Activated naive CD4-positive, alpha-beta T cell treated with anti-CD3 and anti-CD28 coated beads for 36 hours (primary cell): ENCODE measurements at regions of chr1 and their contacts with region 1.

Region 1: DNA sequence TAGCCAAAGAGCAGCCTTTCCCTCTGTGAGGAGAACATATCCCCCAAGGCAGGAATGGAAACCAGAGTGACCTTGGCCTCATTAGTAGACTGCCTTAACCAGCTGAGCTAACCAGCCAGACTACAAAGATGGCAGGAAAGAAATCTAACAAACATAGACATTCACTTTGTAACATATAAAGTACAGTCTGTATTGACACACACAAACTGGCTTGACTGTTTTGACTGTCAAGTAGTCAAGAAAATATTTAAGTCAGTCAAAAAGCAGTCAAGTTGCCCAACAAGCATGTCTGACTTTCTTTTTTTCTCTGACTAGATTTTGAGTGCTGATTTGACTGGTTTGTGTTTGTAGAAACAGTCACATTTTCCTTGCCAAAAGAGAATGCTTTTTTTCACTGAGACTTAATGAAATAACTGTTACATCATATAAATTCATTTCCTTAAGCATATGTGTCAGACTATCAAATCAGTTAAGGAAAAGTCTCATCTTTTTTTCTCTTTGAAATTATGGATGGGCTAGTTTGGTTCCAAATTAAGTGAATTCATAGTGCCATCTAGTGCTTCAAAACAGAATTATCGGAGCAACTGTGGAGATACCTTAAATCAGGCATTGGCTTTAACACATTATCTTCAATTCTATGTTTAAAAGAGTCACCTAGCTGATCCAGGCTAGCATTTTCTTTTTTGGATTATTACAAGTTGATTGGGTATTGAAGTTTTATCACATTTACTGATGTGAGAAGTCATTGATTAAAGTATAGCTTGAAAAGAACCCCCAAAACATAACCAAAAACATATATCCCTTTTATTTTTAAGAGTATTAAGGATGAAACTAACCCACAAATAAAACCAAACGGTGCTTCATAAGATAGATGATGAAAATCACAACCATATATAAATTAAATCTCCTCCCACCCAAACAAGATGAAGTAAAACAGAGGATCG is 75.0 kb downstream of the ATP6V1G3 start:
- DNase-seq: no peak
- H3K4me3 Mint-ChIP-seq: no peak overlapping the region
- H3K27ac Mint-ChIP-seq: no peak overlapping the region
- H3K4me1 Mint-ChIP-seq: peaks cover 13% of the 10 kb centered on the region
- H3K27me3 Mint-ChIP-seq: no peaks in the 10 kb centered on the region

Region 2: DNA sequence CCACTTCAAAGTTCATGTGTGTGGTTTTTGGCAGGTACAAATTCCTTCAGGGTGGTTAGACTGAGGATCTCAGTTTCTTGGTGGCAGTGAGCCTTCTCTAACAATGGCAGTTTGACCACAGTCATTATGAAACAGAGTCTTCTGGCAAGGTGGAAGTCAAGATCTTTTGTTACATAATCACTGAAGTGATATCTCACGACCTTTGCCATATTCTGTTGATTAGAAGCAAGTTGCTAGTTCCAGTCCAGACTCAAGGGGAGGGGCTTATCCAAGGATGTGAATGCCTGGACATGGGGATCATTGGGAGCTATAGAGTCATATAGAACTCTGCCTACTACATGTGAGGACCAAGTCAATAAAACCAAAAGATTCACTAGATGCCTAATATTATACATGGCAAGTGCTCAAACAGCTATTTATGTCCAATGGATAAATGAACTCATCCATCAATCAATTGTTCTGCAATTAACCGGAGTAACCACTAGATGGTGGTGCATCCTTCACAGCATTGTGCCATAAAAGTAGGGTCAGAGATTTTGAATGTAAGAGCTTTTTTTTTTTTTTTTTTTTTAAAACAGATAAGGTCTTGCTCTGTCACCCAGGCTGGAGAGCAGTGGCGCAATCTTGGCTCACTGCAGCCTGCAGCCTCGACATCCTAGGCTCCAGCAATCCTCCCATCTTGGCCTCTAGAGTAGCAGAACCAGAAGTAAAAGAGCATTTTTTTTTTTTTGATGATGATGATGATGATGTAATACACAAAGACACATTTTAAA is 1065.5 kb before region 1 on chr1:
- CTCF ChIA-PET with region 1: no interaction called
- intact Hi-C with region 1: loop called (anchors 1 kb)
- DNase-seq: peak; percentile 28
- H3K4me3 Mint-ChIP-seq: peak overlapping the region; percentile 32
- H3K27ac Mint-ChIP-seq: no peak overlapping the region
- H3K4me1 Mint-ChIP-seq: no peaks in the 10 kb centered on the region
- H3K27me3 Mint-ChIP-seq: no peaks in the 10 kb centered on the region

Region 3: GRCh38 chr1:197775282-197776262 is 689.9 kb before region 1 on chr1 and contains the start of gene DENND1B:
- CTCF ChIA-PET with region 1: no interaction called
- intact Hi-C with region 1: loop called (anchors 1 kb)
- DNase-seq: peak; percentile 84
- H3K4me3 Mint-ChIP-seq: peak within 1 kb of the TSS; percentile 74
- H3K27ac Mint-ChIP-seq: peak within 1 kb of the TSS; percentile 99
- H3K4me1 Mint-ChIP-seq: peaks cover 64% of the 10 kb centered on the region
- H3K27me3 Mint-ChIP-seq: no peaks in the 10 kb centered on the region
- total RNA-seq, gene DENND1B: 8.9 to 9.7 TPM

Region 4: DNA sequence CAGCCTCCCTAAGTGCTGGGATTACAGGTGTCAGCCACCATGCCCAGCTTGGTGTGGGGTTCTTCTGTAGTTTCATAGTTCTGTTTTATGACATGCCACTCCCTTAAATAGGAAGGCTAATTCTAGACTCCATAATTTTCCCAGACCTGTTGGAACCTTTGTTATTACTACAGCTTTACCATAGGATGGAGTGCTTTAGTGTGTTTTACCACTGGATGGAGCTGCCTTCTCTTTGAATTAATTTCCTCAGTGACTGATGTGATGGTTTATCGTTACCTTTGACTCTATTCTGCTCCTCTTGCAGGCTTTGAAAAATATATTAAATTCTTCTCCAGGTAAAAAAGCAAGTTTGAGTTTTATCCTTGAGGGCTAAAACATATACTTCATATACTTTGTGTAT is 393.3 kb before region 1 on chr1:
- CTCF ChIA-PET with region 1: no interaction called
- intact Hi-C with region 1: loop called (anchors 5 kb)
- DNase-seq: no peak
- H3K4me3 Mint-ChIP-seq: no peak overlapping the region
- H3K27ac Mint-ChIP-seq: no peak overlapping the region
- H3K4me1 Mint-ChIP-seq: no peaks in the 10 kb centered on the region
- H3K27me3 Mint-ChIP-seq: peaks cover 6% of the 10 kb centered on the region

Region 5: DNA sequence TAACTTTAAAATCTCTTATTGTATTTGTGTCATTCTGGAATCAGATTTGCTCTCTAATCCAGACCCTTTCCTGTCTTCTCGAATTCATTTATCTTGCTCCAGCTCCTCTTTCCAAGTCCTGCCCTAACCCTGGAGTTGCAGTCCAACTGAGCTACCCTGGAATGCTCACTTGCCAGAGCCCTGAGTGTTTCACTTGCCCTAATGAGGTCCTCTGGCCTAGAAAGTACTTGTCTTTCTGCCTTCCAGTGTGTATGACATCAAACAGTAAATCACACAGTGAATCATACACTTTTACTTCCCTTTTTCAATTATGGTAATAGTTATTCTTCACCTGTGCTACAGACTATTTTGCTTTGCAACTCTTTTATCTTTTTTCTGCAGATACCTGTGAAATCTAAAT is 211.8 kb before region 1 on chr1:
- CTCF ChIA-PET with region 1: no interaction called
- intact Hi-C with region 1: loop called (anchors 1 kb)
- DNase-seq: no peak
- H3K4me3 Mint-ChIP-seq: no peak overlapping the region
- H3K27ac Mint-ChIP-seq: no peak overlapping the region
- H3K4me1 Mint-ChIP-seq: peaks cover 46% of the 10 kb centered on the region
- H3K27me3 Mint-ChIP-seq: no peaks in the 10 kb centered on the region

Region 6: GRCh38 chr1:198681831-198682759 is 216.6 kb after region 1 on chr1:
- CTCF ChIA-PET with region 1: no interaction called
- intact Hi-C with region 1: loop called (anchors 2 kb)
- DNase-seq: peak; percentile 86
- H3K4me3 Mint-ChIP-seq: peak overlapping the region; percentile 61
- H3K27ac Mint-ChIP-seq: peak overlapping the region; percentile 99
- H3K4me1 Mint-ChIP-seq: peaks cover 86% of the 10 kb centered on the region
- H3K27me3 Mint-ChIP-seq: no peaks in the 10 kb centered on the region